ENCODE measurements at regions of chr6 and their contacts with region 1.

Region 1: DNA sequence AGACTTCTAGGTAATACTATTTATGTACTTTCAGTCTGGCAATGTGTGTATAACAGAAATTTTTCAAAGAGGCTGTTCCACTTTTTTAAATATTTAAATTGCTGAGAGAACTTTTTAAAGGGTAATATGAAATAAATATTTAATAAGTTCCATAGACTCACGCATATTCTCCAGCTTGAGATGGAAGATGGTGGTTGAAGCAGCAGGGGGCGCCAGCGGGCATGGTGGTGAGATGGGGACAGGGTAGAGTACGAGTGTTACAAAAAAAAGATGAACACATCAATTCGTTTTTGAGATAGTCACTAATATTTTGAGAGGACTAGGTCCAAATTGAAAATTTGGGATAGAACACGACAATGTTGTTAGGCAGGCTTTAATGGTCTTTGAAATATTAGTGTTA is 68.4 kb downstream of the RSPO3 start:
- DNase-seq: peak; percentile 92
- ATAC-seq: no peak

Region 2: GRCh38 chr6:126804332-126805064 is 382.4 kb before region 1 on chr6:
- intact Hi-C with region 1: loop called (anchors 5 kb)
- DNase-seq: no peak
- ATAC-seq: peak; percentile 34

Measured in Right ventricle myocardium inferior (tissue), 1 donor.